Activated CD4-positive, alpha-beta T cell treated with anti-CD3 and anti-CD28 coated beads for 36 hours (primary cell): ENCODE measurements at regions of chr19 and their contacts with region 1.

Region 1: GRCh38 chr19:11482384-11483050 is 1.7 kb upstream of the ELAVL3 start:
- DNase-seq: peak; percentile 93
- ATAC-seq: peak; percentile 64
- H3K4me3 Mint-ChIP-seq: peak overlapping the region; percentile 66
- H3K27ac Mint-ChIP-seq: peak overlapping the region; percentile 78
- H3K4me1 Mint-ChIP-seq: peaks cover 17% of the 10 kb centered on the region
- H3K27me3 Mint-ChIP-seq: peaks cover 20% of the 10 kb centered on the region

Region 2: GRCh38 chr19:11242864-11243797 is 239.4 kb before region 1 on chr19:
- CTCF ChIA-PET with region 1: interaction called, 7 read pairs
- POLR2A ChIA-PET with region 1: no interaction called
- intact Hi-C with region 1: loop called in 1 of 2 experiments (anchors 1 kb)
- DNase-seq: peak; percentile 95
- ATAC-seq: peak; percentile 100
- H3K4me3 Mint-ChIP-seq: no peak overlapping the region
- H3K27ac Mint-ChIP-seq: no peak overlapping the region
- H3K4me1 Mint-ChIP-seq: peaks cover 5% of the 10 kb centered on the region
- H3K27me3 Mint-ChIP-seq: peaks cover 14% of the 10 kb centered on the region

Region 3: DNA sequence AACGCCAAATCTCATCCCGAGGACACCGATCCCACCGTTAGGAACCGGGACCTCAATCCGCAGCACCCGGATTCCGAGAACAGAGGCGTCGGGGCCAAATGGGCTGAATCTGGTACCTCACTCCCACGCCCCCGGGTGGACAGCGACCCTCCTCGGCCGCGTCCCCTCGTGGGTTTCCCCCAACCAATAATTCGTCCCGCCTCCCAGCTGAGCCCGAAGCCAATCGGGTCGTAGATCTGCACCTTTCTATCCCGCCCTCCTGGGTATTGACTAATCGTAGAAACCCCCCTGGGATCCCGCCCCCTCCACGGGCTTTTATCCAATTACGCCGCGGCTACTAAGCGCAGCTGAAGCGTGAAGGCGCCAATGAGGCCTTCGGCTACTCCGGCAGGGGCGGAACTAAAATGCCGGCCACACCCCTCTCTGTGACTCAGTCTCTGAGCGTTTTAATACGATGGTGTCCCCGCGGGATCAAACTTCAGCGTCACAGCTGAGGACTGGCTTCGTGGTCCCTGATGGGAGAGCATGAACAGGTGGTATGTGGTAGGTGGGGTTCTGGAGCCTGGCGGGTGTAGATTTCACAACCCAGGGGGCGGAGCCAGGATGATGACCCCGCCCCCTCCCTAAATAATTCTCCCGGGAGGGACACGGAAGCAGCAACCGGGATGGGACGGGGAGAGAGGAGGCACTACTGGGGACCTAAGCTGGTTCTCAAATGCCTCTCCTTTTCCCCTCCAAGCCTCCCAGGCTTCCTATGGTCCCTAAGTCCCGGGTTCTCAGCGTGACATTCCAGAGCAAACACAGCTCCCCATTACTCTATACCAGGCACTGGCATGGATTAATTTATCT is 136.2 kb before region 1 on chr19 and contains the starts of genes CCDC159 and TMEM205:
- CTCF ChIA-PET with region 1: interaction called, 3 read pairs
- POLR2A ChIA-PET with region 1: no interaction called
- intact Hi-C with region 1: loop called in 1 of 2 experiments (anchors 1 kb)
- DNase-seq: peak; percentile 99
- ATAC-seq: peak; percentile 99
- H3K4me3 Mint-ChIP-seq: peak within 1 kb of the TSS; percentile 83
- H3K27ac Mint-ChIP-seq: peak within 1 kb of the TSS; percentile 82
- H3K4me1 Mint-ChIP-seq: peaks cover 23% of the 10 kb centered on the region
- H3K27me3 Mint-ChIP-seq: no peaks in the 10 kb centered on the region
- total RNA-seq, gene CCDC159: 15.3 to 18.0 TPM
- total RNA-seq, gene TMEM205: 28.0 to 32.6 TPM

Region 4: GRCh38 chr19:11422163-11423021 is 60.1 kb before region 1 on chr19:
- CTCF ChIA-PET with region 1: no interaction called
- POLR2A ChIA-PET with region 1: interaction called, 3 read pairs
- intact Hi-C with region 1: loop called in 1 of 2 experiments (anchors 1 kb)
- DNase-seq: peak; percentile 82
- ATAC-seq: peak; percentile 78
- H3K4me3 Mint-ChIP-seq: peak overlapping the region; percentile 52
- H3K27ac Mint-ChIP-seq: no peak overlapping the region
- H3K4me1 Mint-ChIP-seq: peaks cover 31% of the 10 kb centered on the region
- H3K27me3 Mint-ChIP-seq: peaks cover 54% of the 10 kb centered on the region

Region 5: DNA sequence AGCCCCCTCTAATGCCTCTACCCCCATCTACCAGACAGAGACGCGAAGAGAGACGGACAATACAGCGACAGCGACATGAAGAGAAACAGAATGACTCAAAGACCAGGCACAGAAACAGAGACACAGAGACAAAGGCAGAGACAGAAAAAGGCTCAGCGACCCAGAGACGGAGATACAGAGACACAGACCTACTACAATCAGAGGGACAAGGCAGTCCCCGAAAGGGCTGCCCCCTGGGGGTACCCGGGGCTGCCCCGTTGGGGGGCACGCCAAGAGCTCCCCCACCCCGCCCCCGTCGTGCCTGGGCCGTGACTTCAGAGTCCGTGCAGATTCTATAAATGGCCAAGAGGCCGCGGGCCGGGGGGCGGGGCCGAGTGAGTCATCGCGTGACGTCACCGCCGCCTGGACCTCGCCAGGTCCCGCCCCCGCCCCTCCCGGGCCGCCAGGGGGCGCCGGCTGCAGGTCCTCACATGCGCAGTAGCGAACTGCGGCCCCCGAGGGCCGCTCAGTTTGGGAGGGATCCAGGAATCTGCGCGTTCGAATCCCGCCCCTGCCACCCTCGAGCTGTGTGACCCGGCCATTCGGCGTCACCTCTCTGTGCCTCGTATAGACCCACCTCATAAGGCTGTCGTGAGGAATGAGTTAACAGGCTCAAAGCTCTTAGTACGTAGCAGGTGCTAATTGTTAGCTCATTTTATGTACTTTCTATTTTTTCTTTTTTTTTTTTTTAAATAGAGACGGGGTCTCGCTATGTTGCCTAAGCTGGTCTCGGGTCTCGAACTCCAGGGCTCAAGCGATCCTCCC is 53.5 kb after region 1 on chr19:
- CTCF ChIA-PET with region 1: interaction called, 4 read pairs
- POLR2A ChIA-PET with region 1: no interaction called
- intact Hi-C with region 1: loop called in 1 of 2 experiments (anchors 2 kb)
- DNase-seq: peak; percentile 94
- ATAC-seq: peak; percentile 76
- H3K4me3 Mint-ChIP-seq: peak overlapping the region; percentile 2
- H3K27ac Mint-ChIP-seq: peak overlapping the region; percentile 51
- H3K4me1 Mint-ChIP-seq: peaks cover 17% of the 10 kb centered on the region
- H3K27me3 Mint-ChIP-seq: peaks cover 14% of the 10 kb centered on the region